GM10248 (cell line): ENCODE measurements at regions of chr1 and their contacts with region 1.

Region 1: DNA sequence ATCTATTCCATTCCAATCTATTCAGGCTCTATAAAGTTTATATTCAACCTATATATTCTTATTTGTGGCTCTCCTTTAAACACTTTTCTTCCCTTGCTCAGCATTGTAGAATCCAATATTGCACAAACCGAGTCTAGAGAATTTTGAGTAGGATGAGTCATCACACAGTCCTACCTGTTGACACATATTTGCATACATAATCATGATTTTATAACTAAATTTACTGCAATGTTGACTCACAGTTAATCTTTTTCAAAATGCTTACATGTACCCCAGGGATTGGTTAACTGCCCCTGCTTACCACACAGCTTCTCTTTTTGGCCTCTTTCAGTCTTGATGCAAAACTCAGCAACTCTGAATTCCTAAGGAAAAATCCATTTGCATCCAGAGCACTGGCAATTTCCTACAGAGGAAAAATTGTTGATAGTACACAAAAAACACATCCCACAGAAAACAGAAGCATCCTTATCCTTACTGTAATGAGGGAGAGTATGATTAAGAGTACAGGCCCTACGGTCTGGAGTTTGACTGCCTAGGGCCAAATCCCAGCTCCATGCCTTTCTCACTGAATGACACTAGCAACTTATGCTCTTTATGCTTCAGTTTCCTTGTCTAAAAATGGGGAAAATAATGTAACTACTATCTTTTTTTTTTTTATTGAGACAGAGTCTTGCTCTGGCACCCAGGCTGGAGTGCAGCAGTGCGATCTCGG is 28.0 kb upstream of the CEP350 start:
- DNase-seq: no peak
- CTCF ChIP-seq: no peak

Region 2: DNA sequence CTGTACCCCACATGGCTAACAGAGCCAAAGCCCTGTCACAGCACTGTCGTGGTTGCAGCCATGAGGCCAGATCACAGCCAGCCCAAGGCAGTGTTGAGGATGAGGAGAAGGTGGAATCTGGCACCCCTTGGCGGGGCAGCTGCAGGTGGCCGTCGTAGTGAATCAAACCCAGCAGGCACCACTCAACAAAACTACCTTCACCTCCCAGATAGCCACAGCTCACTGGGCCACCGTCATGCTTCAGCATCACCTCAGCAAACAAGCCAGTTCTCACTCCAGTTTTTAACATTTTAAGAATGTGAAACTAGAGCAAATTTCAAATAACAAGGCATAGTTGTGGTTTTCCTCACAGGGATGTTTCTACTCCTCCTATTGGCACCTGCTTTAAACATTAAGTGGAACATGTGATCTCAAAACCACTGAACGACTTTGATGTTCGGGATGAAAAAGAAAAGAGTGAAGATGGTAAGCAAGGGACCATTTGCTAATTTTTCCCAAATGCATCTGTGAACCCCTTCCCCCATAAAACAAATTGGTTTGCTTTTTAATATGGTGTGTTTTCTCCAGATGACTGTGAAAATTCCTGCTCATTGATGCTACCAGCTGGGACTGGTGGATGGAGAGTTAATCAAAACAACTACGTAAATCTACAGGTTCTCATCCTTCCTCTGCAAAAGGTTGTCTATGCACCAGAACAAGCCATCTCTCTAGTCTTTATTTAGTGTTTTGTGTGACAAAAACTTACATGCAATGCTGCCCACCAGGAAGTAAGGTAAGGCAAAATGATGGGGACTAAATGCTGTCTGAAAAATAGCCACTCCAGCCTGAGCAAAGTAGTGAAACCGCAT is 94.6 kb before region 1 on chr1:
- CTCF ChIA-PET with region 1: no interaction called
- POLR2A ChIA-PET with region 1: no interaction called
- DNase-seq: no peak
- CTCF ChIP-seq: no peak

Region 3: DNA sequence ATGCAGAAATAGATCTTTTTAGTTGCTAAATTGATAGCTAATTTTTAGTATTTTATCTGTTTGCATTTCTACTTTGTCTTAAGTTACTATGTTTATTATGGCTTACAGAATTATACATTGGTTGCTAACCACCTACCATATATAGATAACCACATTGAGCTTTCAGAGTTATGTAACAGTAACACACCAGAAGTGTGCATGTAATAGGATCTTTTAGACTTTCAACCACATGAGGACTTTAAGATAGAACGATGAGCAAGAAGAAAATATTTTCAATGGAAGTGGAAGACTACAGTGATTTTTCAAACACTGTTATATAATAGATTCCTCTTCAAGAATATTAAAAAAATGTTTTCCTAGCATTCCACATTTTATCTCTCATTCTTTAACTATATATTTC is 15.7 kb before region 1 on chr1:
- CTCF ChIA-PET with region 1: interaction called, 55 read pairs
- POLR2A ChIA-PET with region 1: no interaction called
- DNase-seq: no peak
- CTCF ChIP-seq: no peak